Lower leg skin (tissue), 4 donors: ENCODE measurements at regions of chr3 and their contacts with region 1.

Region 1: GRCh38 chr3:197266331-197266730 is 32.1 kb downstream of the DLG1 start:
- DNase-seq: no peak
- H3K4me3 ChIP-seq: no peak overlapping the region
- CTCF ChIP-seq: no peak
- POLR2A ChIP-seq: no peak

Region 2: DNA sequence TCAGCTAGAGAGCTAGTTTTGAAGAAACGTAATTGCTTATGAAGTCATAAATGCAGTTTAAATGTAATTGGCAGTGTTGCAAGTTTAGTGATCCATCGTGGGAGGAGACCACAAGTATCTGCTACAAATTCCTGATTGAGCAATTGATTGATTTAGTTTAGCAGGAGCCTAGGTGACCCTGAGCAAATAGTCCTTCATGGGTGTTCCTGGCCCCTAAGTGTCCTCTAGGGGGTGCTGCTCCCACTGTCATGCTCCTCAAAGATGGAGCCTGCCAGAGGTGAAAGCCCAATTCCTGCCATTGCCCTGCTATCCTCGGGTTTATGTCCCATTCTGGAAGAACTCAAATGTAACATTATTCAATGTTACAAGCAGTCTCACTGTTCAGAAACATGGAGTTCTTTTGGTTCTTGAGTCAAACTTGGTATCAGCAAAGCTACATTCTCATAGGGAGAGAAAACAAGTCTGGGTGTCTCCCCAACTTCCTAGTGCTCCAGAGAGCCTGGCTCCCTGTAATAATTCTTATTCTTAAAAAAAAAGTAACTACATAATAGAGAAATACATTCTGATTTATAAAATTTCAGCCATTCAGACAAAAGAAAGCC is 428.4 kb before region 1 on chr3:
- intact Hi-C with region 1: no loop called
- DNase-seq: peak in 1 of 2 donors; percentile 29
- H3K4me3 ChIP-seq: no peak overlapping the region
- CTCF ChIP-seq: no peak
- POLR2A ChIP-seq: no peak

Region 3: DNA sequence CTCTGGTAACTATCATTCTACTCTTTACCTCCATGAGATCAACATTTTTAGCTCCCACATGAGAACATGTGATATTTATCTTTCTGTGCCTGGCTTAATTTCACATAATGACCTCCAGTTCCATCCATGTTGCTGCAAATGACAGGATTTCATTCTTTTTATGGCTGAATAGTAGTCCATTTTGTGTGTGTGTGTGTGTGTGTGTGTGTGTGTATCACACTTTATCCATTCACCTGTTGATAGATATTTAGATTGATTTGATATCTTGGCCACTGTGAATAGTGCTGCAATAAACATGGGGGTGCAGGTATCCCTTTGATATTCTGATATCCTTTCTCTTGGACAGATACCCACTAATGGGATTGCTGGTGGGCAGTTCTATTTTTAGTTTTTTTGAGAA is 13.8 kb after region 1 on chr3:
- intact Hi-C with region 1: loop called (anchors 1 kb)
- DNase-seq: no peak
- H3K4me3 ChIP-seq: no peak overlapping the region
- CTCF ChIP-seq: no peak
- POLR2A ChIP-seq: no peak